ENCODE measurements at regions of chr11 and their contacts with region 1.

Region 1: GRCh38 chr11:73335204-73335923 is 27.3 kb downstream of the ARHGEF17 start:
- DNase-seq: peak in 1 of 2 experiments; percentile 98
- H3K4me3 ChIP-seq: no peak overlapping the region
- H3K27ac ChIP-seq: no peak overlapping the region
- H3K4me1 ChIP-seq: peaks cover 10 to 32% (median 26%) of the 10 kb centered on the region in 4 experiments
- H3K27me3 ChIP-seq: peaks cover 28 to 64% (median 52%) of the 10 kb centered on the region in 4 experiments
- CTCF ChIP-seq: peak; percentile 93 to 95 (median 94)
- EP300 ChIP-seq: no peak
- POLR2A ChIP-seq: no peak
- RAD21 ChIP-seq: peak; percentile 93 to 95

Region 2: GRCh38 chr11:73227588-73228211 is 107.7 kb before region 1 on chr11:
- CTCF ChIA-PET with region 1: no interaction called
- POLR2A ChIA-PET with region 1: no interaction called
- DNase-seq: peak in 1 of 2 experiments; percentile 87
- H3K4me3 ChIP-seq: peak overlapping the region in 1 of 4 experiments; percentile 25; a peak in 2 of 8 replicates
- H3K27ac ChIP-seq: no peak overlapping the region
- H3K4me1 ChIP-seq: peaks cover 3 to 15% (median 13%) of the 10 kb centered on the region in 4 experiments
- H3K27me3 ChIP-seq: no peaks in the 10 kb centered on the region; a peak in 2 of 7 replicates
- CTCF ChIP-seq: peak; percentile 50 to 67 (median 62)
- EP300 ChIP-seq: no peak
- POLR2A ChIP-seq: 0 out of 3 replicates have a peak, but pooled peaks of 1 of the 2 experiments have one; percentile 38
- RAD21 ChIP-seq: peak; percentile 32 to 51; a peak in 3 of 4 replicates

Region 3: DNA sequence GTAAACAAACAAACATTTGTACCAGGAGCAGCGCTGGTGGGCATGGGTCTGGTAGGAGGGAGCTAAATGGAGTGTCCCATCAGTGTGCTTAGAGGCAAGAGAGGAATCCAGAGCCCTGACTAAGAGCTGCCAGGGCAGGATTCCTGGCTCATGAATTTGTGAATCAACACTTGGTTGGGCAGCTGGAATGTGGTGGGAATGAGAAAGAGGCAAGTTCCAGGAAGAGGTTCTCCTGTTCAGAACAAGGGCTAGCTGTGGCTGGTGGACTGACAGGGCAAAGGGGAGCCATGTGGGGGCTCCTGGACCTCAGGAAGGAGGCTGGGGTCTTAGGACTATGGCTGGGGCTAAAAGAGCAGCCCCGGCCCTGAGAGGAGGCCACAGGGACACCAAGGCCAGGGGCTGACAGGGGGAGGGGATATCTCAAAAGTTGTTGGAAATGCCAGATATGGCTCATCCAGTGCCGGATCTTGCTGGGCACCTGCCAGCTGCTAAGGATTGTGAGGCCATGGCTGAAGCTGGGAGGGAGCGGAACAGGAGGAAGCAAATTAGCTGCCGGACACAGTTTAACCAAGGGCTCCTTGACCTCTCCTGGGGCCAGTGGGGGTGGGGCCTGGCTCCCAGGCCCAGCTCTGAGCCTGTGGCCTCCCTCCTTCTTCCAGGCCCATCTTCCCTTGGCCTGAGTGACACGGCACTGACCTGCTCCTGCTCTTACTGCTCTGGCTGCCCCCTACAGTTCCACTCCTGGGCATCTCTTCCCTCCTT is 77.8 kb before region 1 on chr11:
- CTCF ChIA-PET with region 1: interaction called, 11 read pairs
- POLR2A ChIA-PET with region 1: no interaction called
- DNase-seq: no peak
- H3K4me3 ChIP-seq: no peak overlapping the region
- H3K27ac ChIP-seq: no peak overlapping the region
- H3K4me1 ChIP-seq: peaks cover 0 to 3% (median 1%) of the 10 kb centered on the region in 4 experiments; a peak in 1 of 7 replicates
- H3K27me3 ChIP-seq: peaks cover 0 to 2% (median 0%) of the 10 kb centered on the region in 4 experiments; a peak in 1 of 7 replicates
- CTCF ChIP-seq: no peak
- EP300 ChIP-seq: no peak
- POLR2A ChIP-seq: no peak
- RAD21 ChIP-seq: no peak

Region 4: GRCh38 chr11:73350908-73351636 is 15.7 kb after region 1 on chr11:
- CTCF ChIA-PET with region 1: interaction called, 1,456 read pairs
- POLR2A ChIA-PET with region 1: interaction called, 4 read pairs
- DNase-seq: peak in 1 of 2 experiments; percentile 63
- H3K4me3 ChIP-seq: no peak overlapping the region
- H3K27ac ChIP-seq: no peak overlapping the region
- H3K4me1 ChIP-seq: no peaks in the 10 kb centered on the region; a peak in 2 of 7 replicates
- H3K27me3 ChIP-seq: no peaks in the 10 kb centered on the region
- CTCF ChIP-seq: peak; percentile 82 to 88 (median 85)
- EP300 ChIP-seq: no peak
- POLR2A ChIP-seq: no peak
- RAD21 ChIP-seq: peak; percentile 65 to 74

Region 5: DNA sequence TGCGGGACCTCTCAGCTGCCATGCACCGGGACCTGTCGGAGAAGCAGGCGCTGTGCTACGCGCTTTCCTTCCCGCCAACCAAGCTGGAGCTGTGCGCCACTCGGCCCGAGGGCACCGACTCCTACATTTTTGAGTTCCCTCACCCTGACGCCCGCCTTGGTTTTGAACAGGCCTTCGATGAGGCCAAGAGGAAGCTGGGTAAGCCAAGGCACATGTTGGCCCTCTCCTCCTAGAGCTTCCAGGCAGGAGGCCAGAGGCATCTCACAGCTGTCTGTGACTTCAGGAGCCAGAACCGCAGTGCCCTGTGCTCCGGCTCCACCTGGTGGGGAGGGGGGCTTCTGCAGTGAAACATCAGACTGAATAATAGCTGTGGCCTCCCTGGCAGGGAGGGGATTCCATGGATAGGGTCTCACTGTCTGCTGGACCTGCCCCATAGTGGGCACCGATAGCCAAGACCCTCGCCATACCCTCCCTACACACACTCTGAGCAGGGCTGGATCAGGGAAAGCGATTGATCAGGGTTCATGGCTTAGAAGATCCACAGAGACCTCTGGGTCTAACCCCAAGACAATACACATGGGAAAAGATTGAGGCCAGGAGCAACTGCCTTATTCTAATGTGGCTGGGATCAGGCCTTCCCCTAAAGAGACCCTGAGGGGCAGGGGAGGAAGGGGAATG is 25.1 kb after region 1 on chr11:
- CTCF ChIA-PET with region 1: interaction called, 1,456 read pairs
- POLR2A ChIA-PET with region 1: no interaction called
- DNase-seq: peak in 1 of 2 experiments; percentile 83
- H3K4me3 ChIP-seq: no peak overlapping the region
- H3K27ac ChIP-seq: no peak overlapping the region
- H3K4me1 ChIP-seq: peaks cover 0 to 3% (median under 1%) of the 10 kb centered on the region in 4 experiments; a peak in 3 of 7 replicates
- H3K27me3 ChIP-seq: peaks cover 0 to 4% (median 2%) of the 10 kb centered on the region in 4 experiments; a peak in 4 of 7 replicates
- CTCF ChIP-seq: peak; percentile 79 to 86 (median 84)
- EP300 ChIP-seq: no peak
- POLR2A ChIP-seq: no peak
- RAD21 ChIP-seq: peak; percentile 70 to 80

Region 6: GRCh38 chr11:73376160-73376802 is 40.9 kb after region 1 on chr11 and contains the start of gene RELT:
- CTCF ChIA-PET with region 1: interaction called, 1,456 read pairs
- POLR2A ChIA-PET with region 1: interaction called, 3 read pairs
- DNase-seq: peak; percentile 71 to 100
- H3K4me3 ChIP-seq: peak within 1 kb of the TSS; percentile 48 to 88 (median 72)
- H3K27ac ChIP-seq: no peak within 1 kb of the TSS
- H3K4me1 ChIP-seq: peaks cover 3 to 13% (median 8%) of the 10 kb centered on the region in 4 experiments
- H3K27me3 ChIP-seq: peaks cover 0 to 15% (median 9%) of the 10 kb centered on the region in 4 experiments; a peak in 4 of 7 replicates
- CTCF ChIP-seq: peak in 2 of 3 experiments; percentile 87 to 96; a peak in 3 of 4 replicates
- EP300 ChIP-seq: no peak; a peak in 1 of 3 replicates
- POLR2A ChIP-seq: peak in 1 of 2 experiments; percentile 93; a peak in 2 of 3 replicates
- RAD21 ChIP-seq: peak; percentile 49 to 56
- total RNA-seq, gene RELT: 5.3 and 5.7 TPM in 2 replicates

Region 7: DNA sequence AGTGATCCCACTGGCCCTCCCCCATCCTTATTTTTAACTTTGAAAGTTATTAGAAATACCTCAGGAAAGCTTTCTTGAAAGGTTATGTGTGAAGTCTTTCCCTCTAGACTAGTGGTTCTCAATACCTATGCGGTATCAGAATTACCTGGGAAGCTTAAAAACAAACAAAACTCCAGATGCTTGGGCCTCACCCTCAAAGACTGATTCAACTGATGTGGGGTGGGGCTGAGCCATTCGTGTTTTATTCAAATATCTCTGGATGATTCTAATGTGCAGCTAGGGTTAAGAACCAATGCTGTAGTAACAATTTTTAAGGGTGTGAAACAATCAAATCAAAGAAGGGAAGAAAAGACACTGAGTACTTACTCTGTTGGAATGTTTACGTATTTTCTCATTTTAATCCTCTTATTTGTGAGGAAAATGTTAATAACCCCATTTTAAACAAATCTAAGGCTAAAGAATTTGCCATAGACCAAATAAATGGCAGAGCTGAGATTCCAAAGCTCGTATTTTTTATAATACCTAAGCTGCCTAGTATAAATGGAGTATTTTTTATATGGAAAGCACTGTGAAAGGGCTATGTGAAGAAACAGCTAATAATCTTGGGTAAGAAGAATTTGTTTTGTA is 358.6 kb after region 1 on chr11:
- CTCF ChIA-PET with region 1: no interaction called
- POLR2A ChIA-PET with region 1: no interaction called
- DNase-seq: no peak
- H3K4me3 ChIP-seq: no peak overlapping the region
- H3K27ac ChIP-seq: no peak overlapping the region
- H3K4me1 ChIP-seq: no peaks in the 10 kb centered on the region
- H3K27me3 ChIP-seq: no peaks in the 10 kb centered on the region
- CTCF ChIP-seq: no peak
- EP300 ChIP-seq: no peak
- POLR2A ChIP-seq: no peak
- RAD21 ChIP-seq: no peak

Region 8: GRCh38 chr11:74288161-74288560 is 952.8 kb after region 1 on chr11:
- CTCF ChIA-PET with region 1: no interaction called
- POLR2A ChIA-PET with region 1: no interaction called
- DNase-seq: no peak
- H3K4me3 ChIP-seq: no peak overlapping the region
- H3K27ac ChIP-seq: no peak overlapping the region
- H3K4me1 ChIP-seq: no peaks in the 10 kb centered on the region
- H3K27me3 ChIP-seq: no peaks in the 10 kb centered on the region
- CTCF ChIP-seq: no peak
- EP300 ChIP-seq: no peak
- POLR2A ChIP-seq: no peak
- RAD21 ChIP-seq: no peak